ENCODE measurements at regions of chr1 and their contacts with region 1.

Region 1: GRCh38 chr1:4700801-4701200 is 46.4 kb downstream of the AJAP1 start:
- DNase-seq: peak; percentile 5
- H3K4me3 ChIP-seq: no peak overlapping the region
- H3K27ac ChIP-seq: no peak overlapping the region
- H3K4me1 ChIP-seq: no peaks in the 10 kb centered on the region
- CTCF ChIP-seq: no peak

Region 2: GRCh38 chr1:3198371-3199271 is 1502.2 kb before region 1 on chr1:
- CTCF ChIA-PET with region 1: interaction called, 14 read pairs
- POLR2A ChIA-PET with region 1: no interaction called
- intact Hi-C with region 1: no loop called
- DNase-seq: no peak
- H3K4me3 ChIP-seq: no peak overlapping the region
- H3K27ac ChIP-seq: no peak overlapping the region
- H3K4me1 ChIP-seq: no peaks in the 10 kb centered on the region
- CTCF ChIP-seq: no peak

Region 3: DNA sequence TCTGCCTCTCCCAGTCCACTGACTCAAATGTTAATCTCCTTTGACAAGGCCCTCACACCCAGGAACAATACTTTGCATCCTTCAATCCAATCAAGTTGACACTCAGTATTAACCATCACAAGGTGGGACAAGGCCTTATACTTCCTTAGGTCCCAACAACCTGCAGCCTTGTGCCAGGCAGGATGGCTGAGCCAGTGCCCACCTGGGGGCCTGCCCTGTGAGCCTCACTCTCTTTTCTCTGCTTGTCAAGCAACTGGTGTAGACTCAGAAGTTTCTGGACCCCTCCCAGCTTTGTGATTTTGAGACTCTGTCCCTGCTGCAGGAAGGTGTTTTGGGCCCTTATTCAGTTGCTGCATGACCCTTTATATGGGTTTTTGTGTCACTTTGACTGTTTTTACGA is 490.8 kb before region 1 on chr1:
- CTCF ChIA-PET with region 1: no interaction called
- POLR2A ChIA-PET with region 1: no interaction called
- intact Hi-C with region 1: no loop called
- DNase-seq: no peak
- H3K4me3 ChIP-seq: no peak overlapping the region
- H3K27ac ChIP-seq: no peak overlapping the region
- H3K4me1 ChIP-seq: no peaks in the 10 kb centered on the region
- CTCF ChIP-seq: no peak

Measured in OCI-LY7 (cell line).